Posterior cingulate gyrus (tissue), 11 donors: ENCODE measurements at regions of chr11 and their contacts with region 1.

Region 1: GRCh38 chr11:14519917-14520746 is at the start of gene PSMA1:
- DNase-seq: peak; percentile 85 to 99 (median 94)

Region 2: GRCh38 chr11:14499554-14500180 is 20.5 kb before region 1 on chr11 and contains the start of gene COPB1:
- intact Hi-C with region 1: loop called (anchors 1 kb)
- DNase-seq: peak; percentile 87 to 99 (median 90)

Region 3: DNA sequence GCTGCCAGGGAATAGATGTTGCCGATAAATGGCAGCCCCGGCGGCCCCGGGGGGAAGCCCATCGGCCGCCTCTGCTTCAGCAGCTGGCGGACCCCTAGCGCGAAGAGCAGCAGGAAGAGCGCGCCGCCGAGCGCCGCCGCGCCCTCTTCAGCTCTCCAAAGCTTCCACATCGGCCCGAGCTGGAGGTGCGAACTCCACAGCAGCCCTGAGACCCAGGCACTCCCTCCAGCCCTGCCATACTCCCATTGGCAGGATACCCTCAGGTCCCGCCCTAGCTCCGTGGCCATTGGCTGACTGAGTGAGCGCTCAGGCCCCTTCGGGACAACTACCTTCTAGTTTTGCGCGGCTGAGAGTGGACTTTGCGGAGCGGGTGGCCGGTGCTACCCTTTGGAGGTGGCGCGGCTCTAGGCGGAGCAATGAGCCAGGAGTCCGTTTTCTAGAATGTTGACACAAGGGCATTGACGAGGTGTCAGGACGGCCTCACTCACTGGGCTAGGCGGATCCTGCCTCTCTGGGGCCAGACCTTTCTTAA is 372.0 kb after region 1 on chr11 and contains the start of gene CYP2R1:
- intact Hi-C with region 1: loop called (anchors 5 kb)
- DNase-seq: peak; percentile 89 to 99 (median 94)